Activated naive CD4-positive, alpha-beta T cell treated with anti-CD3 and anti-CD28 coated beads for 36 hours (primary cell): ENCODE measurements at regions of chr12 and their contacts with region 1.

Region 1: GRCh38 chr12:111434680-111435338 is 29.1 kb downstream of the SH2B3 start:
- DNase-seq: peak; percentile 89
- H3K4me3 Mint-ChIP-seq: peak overlapping the region; percentile 56
- H3K27ac Mint-ChIP-seq: peak overlapping the region; percentile 92
- H3K4me1 Mint-ChIP-seq: peaks cover 91% of the 10 kb centered on the region
- H3K27me3 Mint-ChIP-seq: no peaks in the 10 kb centered on the region

Region 2: GRCh38 chr12:111444925-111445725 is 10.3 kb after region 1 on chr12:
- CTCF ChIA-PET with region 1: interaction called, 25 read pairs
- intact Hi-C with region 1: loop called (anchors 1 kb)
- DNase-seq: peak; percentile 97
- H3K4me3 Mint-ChIP-seq: no peak overlapping the region
- H3K27ac Mint-ChIP-seq: peak overlapping the region; percentile 67
- H3K4me1 Mint-ChIP-seq: peaks cover 67% of the 10 kb centered on the region
- H3K27me3 Mint-ChIP-seq: no peaks in the 10 kb centered on the region

Region 3: DNA sequence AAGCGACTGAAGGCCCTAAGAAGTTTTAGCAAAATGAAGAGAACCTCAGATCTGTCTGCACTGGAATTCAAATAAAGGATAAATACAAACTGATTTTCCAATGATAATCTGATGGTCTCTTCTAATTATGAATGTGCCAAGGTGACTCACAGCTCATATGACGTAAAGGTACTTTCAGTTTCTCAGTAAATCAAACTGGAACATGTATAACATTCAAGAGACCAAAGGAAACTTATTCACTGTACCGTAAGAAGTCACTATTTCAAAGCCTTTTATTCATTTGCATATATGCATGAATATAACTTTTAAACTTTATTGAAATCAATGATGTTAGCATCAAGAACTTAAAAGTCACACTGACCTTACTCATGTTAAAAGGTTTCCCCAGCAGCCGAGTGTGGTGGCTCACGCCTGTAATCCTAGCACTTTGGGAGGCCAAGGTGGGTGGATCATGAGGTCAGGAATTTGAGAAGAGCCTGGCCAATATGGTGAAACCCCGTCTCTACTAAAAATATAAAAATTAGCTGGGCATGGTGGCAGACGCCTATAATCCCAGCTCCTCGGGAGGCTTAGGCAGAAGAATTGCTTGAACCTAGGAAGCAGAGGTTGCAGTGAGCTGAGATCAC is 112.1 kb after region 1 on chr12:
- CTCF ChIA-PET with region 1: no interaction called
- intact Hi-C with region 1: no loop called
- DNase-seq: peak; percentile 54
- H3K4me3 Mint-ChIP-seq: no peak overlapping the region
- H3K27ac Mint-ChIP-seq: peak overlapping the region; percentile 51
- H3K4me1 Mint-ChIP-seq: peaks cover 20% of the 10 kb centered on the region
- H3K27me3 Mint-ChIP-seq: no peaks in the 10 kb centered on the region

Region 4: DNA sequence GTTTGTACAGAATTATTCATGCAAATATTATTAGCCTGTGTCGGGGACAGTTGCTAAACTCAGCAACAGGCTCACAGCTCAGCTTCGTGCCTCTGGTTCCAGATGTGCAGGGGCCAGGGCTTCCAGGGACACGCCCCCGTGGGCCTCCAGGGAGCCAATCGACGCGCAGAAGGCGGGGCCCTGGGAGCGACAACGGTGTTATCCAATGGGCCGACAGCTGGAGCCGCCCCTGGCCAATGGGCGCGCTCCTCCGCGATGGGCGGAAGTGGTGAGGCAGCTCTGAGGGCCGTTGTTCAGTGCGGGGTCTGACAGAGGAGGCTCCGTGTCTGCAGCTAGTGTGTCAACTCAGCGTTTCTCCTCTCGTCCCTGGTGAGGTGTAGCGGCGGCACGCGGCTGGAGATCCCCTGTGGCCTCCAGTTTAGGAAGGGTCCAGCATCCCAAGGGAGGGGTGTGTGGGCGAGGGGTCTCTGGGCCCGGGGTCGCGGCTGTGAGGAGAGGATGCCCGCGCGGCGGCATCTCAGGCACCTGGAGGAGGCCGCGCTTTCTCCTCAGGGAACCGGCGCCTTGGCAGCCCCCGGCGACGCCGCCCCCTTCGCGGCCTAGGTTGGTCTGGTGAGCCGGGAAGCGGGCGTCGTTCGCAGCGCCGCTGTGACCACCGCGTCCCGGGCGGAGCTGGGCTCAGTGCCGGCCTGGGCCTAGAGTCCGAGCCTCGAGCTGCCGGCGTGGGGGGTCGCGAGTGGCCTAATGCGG is 690.6 kb after region 1 on chr12 and contains the start of gene TRAFD1:
- CTCF ChIA-PET with region 1: no interaction called
- intact Hi-C with region 1: loop called (anchors 5 kb)
- DNase-seq: peak; percentile 98
- H3K4me3 Mint-ChIP-seq: peak within 1 kb of the TSS; percentile 72
- H3K27ac Mint-ChIP-seq: peak within 1 kb of the TSS; percentile 75
- H3K4me1 Mint-ChIP-seq: peaks cover 42% of the 10 kb centered on the region
- H3K27me3 Mint-ChIP-seq: no peaks in the 10 kb centered on the region
- total RNA-seq, gene TRAFD1: 49.6 to 55.7 TPM